ENCODE measurements at regions of chr19 and their contacts with region 1.

Region 1: DNA sequence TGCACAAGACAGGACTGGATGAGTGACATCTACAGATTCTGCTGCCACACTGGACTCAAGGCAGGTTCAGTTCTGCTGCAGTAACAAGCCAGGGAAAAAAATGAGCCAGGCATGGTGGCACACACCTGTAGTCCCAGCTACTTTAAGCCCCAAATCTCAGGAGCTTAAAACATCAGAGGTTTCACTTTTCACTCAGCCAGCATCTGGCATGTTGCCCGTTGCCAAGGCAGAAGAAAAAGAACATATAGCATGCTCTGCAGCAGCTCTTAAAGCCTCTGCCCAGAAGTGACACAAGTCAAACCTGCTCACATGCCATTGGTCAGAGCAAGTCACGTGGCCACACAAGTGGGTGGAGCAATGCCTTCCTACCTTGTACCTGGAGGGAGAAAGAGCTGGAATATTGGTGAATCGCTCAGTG is 14.7 kb upstream of the ADGRE5 start:
- DNase-seq: peak; percentile 99
- H3K4me3 Mint-ChIP-seq: peak overlapping the region; percentile 75
- H3K27ac Mint-ChIP-seq: peak overlapping the region; percentile 100
- H3K4me1 Mint-ChIP-seq: peaks cover 78% of the 10 kb centered on the region
- H3K27me3 Mint-ChIP-seq: no peaks in the 10 kb centered on the region

Region 2: GRCh38 chr19:13150187-13150930 is 1216.1 kb before region 1 on chr19 and contains the starts of genes IER2 and STX10:
- CTCF ChIA-PET with region 1: no interaction called
- intact Hi-C with region 1: loop called (anchors 5 kb)
- DNase-seq: peak; percentile 96
- H3K4me3 Mint-ChIP-seq: peak within 1 kb of the TSS; percentile 99
- H3K27ac Mint-ChIP-seq: peak within 1 kb of the TSS; percentile 98
- H3K4me1 Mint-ChIP-seq: peaks cover 19% of the 10 kb centered on the region
- H3K27me3 Mint-ChIP-seq: no peaks in the 10 kb centered on the region
- total RNA-seq, gene IER2: 120 to 123 TPM
- total RNA-seq, gene STX10: 48.3 to 48.9 TPM

Region 3: DNA sequence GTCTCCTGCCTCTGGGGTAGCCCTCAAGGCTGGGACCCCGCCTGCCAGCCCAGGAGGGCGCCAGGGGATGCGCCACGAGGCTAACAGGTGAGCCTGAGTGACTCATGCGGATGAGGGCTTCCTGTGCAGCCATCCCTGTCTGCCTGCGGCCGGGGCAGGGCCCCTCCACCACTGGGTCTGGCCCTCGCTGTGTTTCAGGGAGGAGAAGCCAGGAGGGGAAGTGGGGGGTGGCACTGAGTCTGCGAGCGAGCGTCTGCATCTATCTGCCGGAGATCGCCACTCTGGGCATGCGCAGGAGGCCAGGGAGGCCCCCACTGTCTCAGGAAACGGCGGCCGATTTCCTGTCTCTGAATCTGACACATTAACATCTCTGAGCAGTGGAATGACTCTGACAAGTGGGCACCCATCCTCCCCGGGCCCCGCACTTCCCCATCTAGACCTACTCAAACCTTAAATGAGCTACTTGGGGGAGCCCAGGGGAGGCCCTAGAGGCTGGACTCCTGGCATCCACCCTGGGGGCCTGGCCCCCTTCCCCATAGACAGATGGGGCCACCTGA is 380.1 kb before region 1 on chr19:
- CTCF ChIA-PET with region 1: no interaction called
- intact Hi-C with region 1: loop called (anchors 1 kb)
- DNase-seq: peak; percentile 100
- H3K4me3 Mint-ChIP-seq: peak overlapping the region; percentile 65
- H3K27ac Mint-ChIP-seq: peak overlapping the region; percentile 98
- H3K4me1 Mint-ChIP-seq: peaks cover 64% of the 10 kb centered on the region
- H3K27me3 Mint-ChIP-seq: no peaks in the 10 kb centered on the region

Region 4: DNA sequence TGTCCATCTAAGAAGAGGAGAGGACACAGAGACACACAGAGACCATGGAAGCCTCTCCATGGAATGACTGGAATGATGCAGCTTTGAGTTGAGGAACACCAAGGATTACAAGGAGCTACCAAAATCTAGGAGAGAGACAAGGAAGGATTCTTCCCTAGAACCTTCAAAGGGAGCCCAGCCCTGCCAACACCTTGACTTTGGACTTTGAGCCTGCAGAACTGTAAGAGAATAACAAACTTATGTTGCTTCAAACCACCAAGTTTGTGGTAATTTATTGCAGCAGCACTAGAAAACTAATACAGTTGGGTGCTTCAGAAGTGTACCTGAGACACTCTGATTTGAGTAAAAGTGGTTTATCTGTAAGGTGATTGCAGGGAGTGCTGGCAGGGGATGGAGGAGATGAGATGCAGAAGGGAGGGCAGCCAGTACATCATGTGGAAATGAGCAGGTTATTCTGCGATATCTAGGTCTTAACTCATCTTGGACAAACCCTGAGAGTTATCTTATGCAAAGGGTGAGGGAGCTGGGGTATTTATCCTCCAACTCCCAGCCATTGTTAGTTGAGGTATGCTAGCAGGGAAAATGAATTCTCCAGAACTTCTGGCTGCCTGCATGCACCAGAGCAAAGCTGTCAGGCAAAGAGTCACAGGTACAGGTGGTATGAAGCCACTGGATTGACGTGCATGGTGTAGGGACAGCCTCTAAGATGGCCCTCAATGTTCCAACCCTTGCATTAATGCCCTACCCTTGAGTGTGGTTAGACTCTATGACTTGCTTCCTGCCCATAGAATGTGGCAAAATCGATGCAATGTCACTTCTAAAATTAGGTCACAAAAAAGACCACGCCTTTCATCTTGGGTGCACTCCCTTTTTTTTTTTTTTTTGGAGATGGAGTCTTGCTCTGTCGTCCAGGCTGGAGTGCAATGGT is 129.2 kb before region 1 on chr19:
- CTCF ChIA-PET with region 1: no interaction called
- intact Hi-C with region 1: no loop called
- DNase-seq: no peak
- H3K4me3 Mint-ChIP-seq: no peak overlapping the region
- H3K27ac Mint-ChIP-seq: no peak overlapping the region
- H3K4me1 Mint-ChIP-seq: no peaks in the 10 kb centered on the region
- H3K27me3 Mint-ChIP-seq: no peaks in the 10 kb centered on the region

Region 5: DNA sequence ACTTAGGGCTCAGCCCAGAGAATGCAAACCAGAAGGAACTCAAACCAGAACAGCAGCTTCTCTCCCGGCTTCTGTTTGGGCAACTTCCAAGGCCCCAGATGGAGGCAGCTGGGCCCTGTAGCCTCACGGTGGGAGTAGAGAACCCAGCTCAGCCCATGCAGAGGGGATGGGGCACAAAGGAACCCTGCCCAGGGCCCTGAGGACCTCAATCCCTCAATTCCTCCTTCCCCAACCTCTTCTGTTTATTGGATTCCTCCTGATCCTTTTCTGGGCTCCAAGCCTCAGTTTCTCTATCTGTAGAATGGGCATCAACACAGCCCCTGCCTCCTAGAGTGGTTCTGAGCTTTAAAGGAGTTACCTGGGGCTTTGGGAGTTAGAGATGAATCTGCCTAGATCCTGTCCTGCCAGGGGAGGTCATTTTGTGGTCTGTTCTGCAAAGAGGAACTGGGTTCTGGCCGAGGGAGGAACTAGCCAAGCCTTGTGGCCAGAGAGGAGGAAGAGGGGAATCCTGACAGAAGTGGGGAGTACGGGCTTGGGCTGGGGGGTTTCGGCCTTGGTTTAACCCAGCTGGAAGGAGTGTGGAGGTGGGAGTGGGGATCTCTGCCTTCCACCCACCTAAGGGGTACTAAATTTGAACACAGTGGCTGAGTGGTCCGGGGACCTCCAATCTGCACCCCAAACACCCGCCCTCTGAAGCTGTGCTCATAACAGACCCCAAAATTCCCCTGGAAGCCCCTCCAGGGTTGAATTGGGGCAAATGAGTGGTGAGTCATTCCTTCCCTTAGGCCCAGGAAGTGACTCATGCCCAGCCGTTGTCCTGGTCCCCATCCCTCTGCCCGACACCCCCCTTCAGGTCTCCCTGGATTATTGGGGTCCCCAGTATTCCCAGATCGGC is 17.4 kb after region 1 on chr19:
- CTCF ChIA-PET with region 1: interaction called, 38 read pairs
- intact Hi-C with region 1: loop called (anchors 1 kb)
- DNase-seq: peak; percentile 79
- H3K4me3 Mint-ChIP-seq: peak overlapping the region; percentile 97
- H3K27ac Mint-ChIP-seq: peak overlapping the region; percentile 100
- H3K4me1 Mint-ChIP-seq: peaks cover 36% of the 10 kb centered on the region
- H3K27me3 Mint-ChIP-seq: no peaks in the 10 kb centered on the region

Region 6: GRCh38 chr19:14419106-14419813 is 52.8 kb after region 1 on chr19 and contains the start of gene DDX39A:
- CTCF ChIA-PET with region 1: interaction called, 4 read pairs
- intact Hi-C with region 1: loop called (anchors 1 kb)
- DNase-seq: peak; percentile 99
- H3K4me3 Mint-ChIP-seq: peak within 1 kb of the TSS; percentile 100
- H3K27ac Mint-ChIP-seq: peak within 1 kb of the TSS; percentile 100
- H3K4me1 Mint-ChIP-seq: peaks cover 32% of the 10 kb centered on the region
- H3K27me3 Mint-ChIP-seq: no peaks in the 10 kb centered on the region
- total RNA-seq, gene DDX39A: 219 to 227 TPM

Region 7: GRCh38 chr19:14517840-14518505 is 151.5 kb after region 1 on chr19 and contains the start of gene DNAJB1:
- CTCF ChIA-PET with region 1: interaction called, 4 read pairs
- intact Hi-C with region 1: loop called (anchors 1 kb)
- DNase-seq: peak; percentile 70
- H3K4me3 Mint-ChIP-seq: peak within 1 kb of the TSS; percentile 89
- H3K27ac Mint-ChIP-seq: peak within 1 kb of the TSS; percentile 92
- H3K4me1 Mint-ChIP-seq: peaks cover 63% of the 10 kb centered on the region
- H3K27me3 Mint-ChIP-seq: no peaks in the 10 kb centered on the region
- total RNA-seq, gene DNAJB1: 48.1 to 49.5 TPM